H1 (cell line): ENCODE measurements at regions of chr10 and their contacts with region 1.

Region 1: GRCh38 chr10:123165445-123166072 is 11.4 kb downstream of the BUB3 start:
- DNase-seq: no peak
- H3K4me3 ChIP-seq: no peak overlapping the region
- H3K27ac ChIP-seq: no peak overlapping the region
- H3K4me1 ChIP-seq: no peaks in the 10 kb centered on the region
- H3K27me3 ChIP-seq: no peaks in the 10 kb centered on the region
- CTCF ChIP-seq: peak; percentile 32 to 46 (median 44); a peak in 3 of 4 replicates
- EP300 ChIP-seq: no peak
- POLR2A ChIP-seq: peak in 1 of 2 experiments; percentile 24; a peak in 1 of 3 replicates
- RAD21 ChIP-seq: peak; percentile 34 to 40

Region 2: DNA sequence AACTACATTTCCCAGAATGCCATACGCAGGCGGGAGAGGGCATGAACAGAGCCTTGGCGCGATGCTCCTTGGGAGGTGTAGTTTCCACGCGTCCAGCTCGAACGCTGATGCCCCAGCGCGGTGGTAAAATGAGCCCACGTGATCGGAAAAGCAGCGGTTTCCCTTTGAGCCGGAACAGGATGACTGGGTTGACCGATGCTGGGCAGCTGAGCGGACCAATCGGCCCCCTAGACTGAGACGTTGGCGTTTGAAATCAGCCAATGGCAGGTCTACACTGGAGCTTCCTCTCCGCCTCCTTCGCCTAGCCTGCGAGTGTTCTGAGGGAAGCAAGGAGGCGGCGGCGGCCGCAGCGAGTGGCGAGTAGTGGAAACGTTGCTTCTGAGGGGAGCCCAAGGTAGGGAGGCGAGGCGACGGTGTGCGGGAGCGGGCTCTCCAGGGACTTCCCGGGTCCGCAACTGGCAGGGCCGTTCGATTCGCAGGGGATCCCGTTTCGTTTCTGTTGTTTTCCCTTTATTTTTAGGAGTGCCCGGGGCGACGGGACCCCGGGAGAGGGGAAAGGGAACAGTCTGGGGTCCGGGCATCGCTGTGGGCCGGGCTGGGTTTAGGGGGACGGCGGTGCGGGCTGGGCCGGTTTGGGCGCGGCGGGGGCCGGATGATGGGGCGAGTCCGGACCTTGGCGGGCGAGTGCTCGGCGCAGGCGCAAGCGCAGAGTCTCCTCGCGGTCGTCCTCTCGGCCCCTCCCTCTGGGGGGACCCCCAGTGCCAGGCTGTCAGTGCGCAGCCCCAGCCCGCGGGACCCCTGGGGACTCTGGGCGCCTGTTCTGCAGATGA is 11.3 kb before region 1 on chr10 and contains the start of gene BUB3:
- CTCF ChIA-PET with region 1: interaction called, 3 read pairs
- POLR2A ChIA-PET with region 1: interaction called, 22 read pairs
- DNase-seq: peak; percentile 87 to 99
- H3K4me3 ChIP-seq: peak within 1 kb of the TSS; percentile 78 to 94 (median 92)
- H3K27ac ChIP-seq: peak within 1 kb of the TSS; percentile 83; the same call in 1 of the 2 replicates
- H3K4me1 ChIP-seq: peaks cover 4 to 21% (median 13%) of the 10 kb centered on the region in 4 experiments
- H3K27me3 ChIP-seq: peaks cover 13 to 38% (median 25%) of the 10 kb centered on the region in 4 experiments; a peak in 6 of 7 replicates
- CTCF ChIP-seq: no peak
- EP300 ChIP-seq: no peak
- POLR2A ChIP-seq: peak in 1 of 2 experiments; percentile 95; a peak in 2 of 3 replicates
- RAD21 ChIP-seq: no peak
- total RNA-seq, gene BUB3: 184 and 207 TPM in 2 replicates

Region 3: GRCh38 chr10:123175389-123176387 is 10.1 kb after region 1 on chr10:
- CTCF ChIA-PET with region 1: interaction called, 11 read pairs
- POLR2A ChIA-PET with region 1: interaction called, 6 read pairs
- DNase-seq: no peak
- H3K4me3 ChIP-seq: no peak overlapping the region
- H3K27ac ChIP-seq: no peak overlapping the region
- H3K4me1 ChIP-seq: no peaks in the 10 kb centered on the region
- H3K27me3 ChIP-seq: no peaks in the 10 kb centered on the region
- CTCF ChIP-seq: no peak
- EP300 ChIP-seq: no peak
- POLR2A ChIP-seq: no peak
- RAD21 ChIP-seq: no peak

Region 4: DNA sequence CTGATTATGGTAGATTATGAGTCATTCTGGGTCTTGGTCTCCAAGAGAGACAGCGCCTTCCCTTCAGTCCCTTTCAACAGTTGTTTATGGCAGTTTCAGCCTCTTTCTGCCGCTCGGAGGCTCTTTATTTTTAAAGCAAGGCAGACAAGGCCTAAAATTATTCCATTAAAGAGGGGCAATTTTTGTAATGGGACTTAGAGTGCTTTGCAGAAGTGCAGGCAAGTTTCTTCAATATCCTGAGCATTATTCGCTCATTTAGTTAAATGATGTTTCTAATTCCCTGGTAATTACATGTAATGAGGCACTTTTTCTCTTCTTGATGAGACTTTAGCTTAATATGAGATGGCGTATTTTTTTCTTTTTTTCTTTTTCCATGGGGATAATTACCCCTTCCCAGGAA is 22.2 kb after region 1 on chr10:
- CTCF ChIA-PET with region 1: no interaction called
- POLR2A ChIA-PET with region 1: no interaction called
- DNase-seq: no peak
- H3K4me3 ChIP-seq: no peak overlapping the region
- H3K27ac ChIP-seq: no peak overlapping the region
- H3K4me1 ChIP-seq: peaks cover 0 to 3% (median 0%) of the 10 kb centered on the region in 4 experiments; a peak in 1 of 7 replicates
- H3K27me3 ChIP-seq: no peaks in the 10 kb centered on the region
- CTCF ChIP-seq: no peak
- EP300 ChIP-seq: no peak
- POLR2A ChIP-seq: no peak
- RAD21 ChIP-seq: no peak

Region 5: DNA sequence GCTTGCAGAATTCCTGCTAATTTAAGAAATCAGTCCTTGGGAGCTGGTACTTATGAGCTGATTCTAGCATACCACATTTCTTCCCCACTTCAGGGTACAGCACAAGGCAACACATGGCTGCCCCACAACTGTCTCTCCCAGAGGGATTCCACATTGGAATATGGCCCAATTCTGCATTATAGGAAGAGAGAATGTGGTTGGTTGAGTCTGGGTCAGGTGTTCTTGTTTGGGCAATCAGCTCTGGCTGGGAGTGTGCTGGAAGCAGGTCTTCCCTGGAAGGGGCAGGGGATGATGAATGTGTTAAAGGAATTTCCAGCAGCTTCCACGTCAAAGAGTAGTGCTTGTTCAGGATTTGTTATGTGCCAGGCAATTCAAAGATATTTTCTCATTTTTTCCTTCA is 84.3 kb after region 1 on chr10:
- CTCF ChIA-PET with region 1: no interaction called
- POLR2A ChIA-PET with region 1: no interaction called
- DNase-seq: no peak
- H3K4me3 ChIP-seq: no peak overlapping the region
- H3K27ac ChIP-seq: no peak overlapping the region
- H3K4me1 ChIP-seq: no peaks in the 10 kb centered on the region; a peak in 1 of 7 replicates
- H3K27me3 ChIP-seq: no peaks in the 10 kb centered on the region
- CTCF ChIP-seq: no peak
- EP300 ChIP-seq: no peak
- POLR2A ChIP-seq: no peak
- RAD21 ChIP-seq: no peak

Region 6: GRCh38 chr10:123278445-123278844 is 112.9 kb after region 1 on chr10:
- CTCF ChIA-PET with region 1: no interaction called
- POLR2A ChIA-PET with region 1: no interaction called
- DNase-seq: no peak
- H3K4me3 ChIP-seq: no peak overlapping the region
- H3K27ac ChIP-seq: no peak overlapping the region
- H3K4me1 ChIP-seq: peaks cover 0 to 6% (median 0%) of the 10 kb centered on the region in 4 experiments; a peak in 2 of 7 replicates
- H3K27me3 ChIP-seq: no peaks in the 10 kb centered on the region
- CTCF ChIP-seq: no peak
- EP300 ChIP-seq: no peak
- POLR2A ChIP-seq: no peak
- RAD21 ChIP-seq: no peak